Mammary epithelial cell (primary cell): ENCODE measurements at regions of chr9 and their contacts with region 1.

Region 1: GRCh38 chr9:128249908-128250838 is 25.6 kb downstream of the GOLGA2 start:
- DNase-seq: peak; percentile 86
- H3K4me3 ChIP-seq: peak overlapping the region; percentile 62 to 69 (median 64)
- H3K27ac ChIP-seq: peak overlapping the region; percentile 22
- H3K4me1 ChIP-seq: peaks cover 10% of the 10 kb centered on the region
- H3K27me3 ChIP-seq: no peaks in the 10 kb centered on the region
- CTCF ChIP-seq: no peak

Region 2: GRCh38 chr9:128127990-128128835 is 122.0 kb before region 1 on chr9:
- CTCF ChIA-PET with region 1: no interaction called
- dilution Hi-C with region 1: no loop called
- in situ Hi-C with region 1: no loop called
- intact Hi-C with region 1: loop called (anchors 10 kb)
- DNase-seq: peak; percentile 91
- H3K4me3 ChIP-seq: peak overlapping the region; percentile 64 to 100 (median 91)
- H3K27ac ChIP-seq: peak overlapping the region; percentile 90
- H3K4me1 ChIP-seq: peaks cover 15% of the 10 kb centered on the region
- H3K27me3 ChIP-seq: no peaks in the 10 kb centered on the region
- CTCF ChIP-seq: no peak

Region 3: DNA sequence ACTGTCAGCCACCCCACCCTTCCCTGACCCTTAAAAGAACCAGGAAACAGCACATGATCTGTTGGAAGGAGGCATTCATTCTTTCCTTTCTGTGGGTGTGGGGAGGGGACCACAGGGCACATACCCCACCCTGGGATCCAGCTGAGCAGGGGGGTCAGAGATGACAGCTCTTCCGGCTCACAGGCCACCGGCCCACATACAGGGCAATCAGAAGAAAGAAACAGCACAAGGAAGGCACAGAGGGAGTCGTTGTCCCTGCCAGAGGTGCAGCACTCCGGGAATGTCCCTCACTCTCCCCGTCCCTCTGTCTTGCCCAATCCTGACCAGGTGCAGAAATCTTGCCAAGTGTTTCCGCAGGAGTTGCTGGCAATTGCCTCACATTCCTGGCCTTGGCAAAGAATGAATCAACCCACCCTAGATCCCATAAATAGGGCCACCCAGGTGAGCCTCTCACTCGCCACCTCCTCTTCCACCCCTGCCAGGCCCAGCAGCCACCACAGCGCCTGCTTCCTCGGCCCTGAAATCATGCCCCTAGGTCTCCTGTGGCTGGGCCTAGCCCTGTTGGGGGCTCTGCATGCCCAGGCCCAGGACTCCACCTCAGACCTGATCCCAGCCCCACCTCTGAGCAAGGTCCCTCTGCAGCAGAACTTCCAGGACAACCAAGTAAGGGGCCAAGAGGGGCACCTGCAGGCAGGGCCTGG is 101.0 kb before region 1 on chr9 and contains the start of gene LCN2:
- CTCF ChIA-PET with region 1: no interaction called
- dilution Hi-C with region 1: loop called (anchors 5 kb)
- in situ Hi-C with region 1: no loop called
- intact Hi-C with region 1: no loop called
- DNase-seq: peak; percentile 90
- H3K4me3 ChIP-seq: peak within 1 kb of the TSS in 1 of 3 experiments; percentile 12
- H3K27ac ChIP-seq: no peak within 1 kb of the TSS
- H3K4me1 ChIP-seq: peaks cover 20% of the 10 kb centered on the region
- H3K27me3 ChIP-seq: no peaks in the 10 kb centered on the region
- CTCF ChIP-seq: no peak
- total RNA-seq, gene LCN2: 6.5 to 20.0 TPM

Region 4: GRCh38 chr9:128191406-128192046 is 58.6 kb before region 1 on chr9 and contains the start of gene CIZ1:
- CTCF ChIA-PET with region 1: no interaction called
- dilution Hi-C with region 1: loop called (anchors 5 kb)
- in situ Hi-C with region 1: no loop called
- intact Hi-C with region 1: loop called (anchors 2 kb)
- DNase-seq: peak; percentile 63
- H3K4me3 ChIP-seq: peak within 1 kb of the TSS; percentile 84 to 90 (median 88)
- H3K27ac ChIP-seq: peak within 1 kb of the TSS; percentile 26
- H3K4me1 ChIP-seq: peaks cover 19% of the 10 kb centered on the region
- H3K27me3 ChIP-seq: no peaks in the 10 kb centered on the region
- CTCF ChIP-seq: peak; percentile 41 to 72
- total RNA-seq, gene CIZ1: 36.0 to 109 TPM

Region 5: DNA sequence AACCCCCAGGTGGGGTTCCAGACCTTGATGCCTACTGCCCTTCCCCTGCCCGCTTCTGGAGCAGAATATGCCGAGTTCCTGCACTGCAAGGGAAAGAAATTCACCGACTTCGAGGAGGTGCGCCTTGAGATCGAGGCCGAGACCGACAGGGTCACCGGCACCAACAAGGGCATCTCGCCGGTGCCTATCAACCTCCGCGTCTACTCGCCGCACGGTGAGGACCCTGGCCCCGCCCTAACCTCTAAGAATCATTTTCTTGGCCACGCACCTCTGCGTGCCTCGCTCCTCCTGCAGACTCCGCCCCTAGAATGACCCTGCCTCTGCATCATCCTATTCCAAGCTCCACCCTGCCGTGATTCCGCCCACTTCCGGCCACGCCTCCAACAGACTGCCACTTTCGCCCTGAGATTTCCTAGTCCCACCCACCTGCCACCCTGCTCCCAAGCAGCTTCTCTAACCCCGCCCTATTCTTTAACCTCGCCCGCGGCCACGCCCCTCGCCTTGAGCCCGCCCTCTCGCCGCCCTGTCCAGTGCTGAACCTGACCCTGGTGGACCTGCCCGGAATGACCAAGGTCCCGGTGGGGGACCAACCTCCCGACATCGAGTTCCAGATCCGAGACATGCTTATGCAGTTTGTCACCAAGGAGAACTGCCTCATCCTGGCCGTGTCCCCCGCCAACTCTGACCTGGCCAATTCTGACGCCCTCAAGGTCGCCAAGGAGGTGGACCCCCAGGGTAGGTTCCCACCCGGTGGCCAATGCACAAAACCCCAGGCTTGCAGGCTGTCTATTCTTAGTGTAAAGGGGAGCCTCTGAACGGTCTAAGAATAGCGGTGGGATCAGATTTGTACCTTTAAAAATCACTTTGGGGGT is 31.4 kb before region 1 on chr9:
- CTCF ChIA-PET with region 1: no interaction called
- dilution Hi-C with region 1: no loop called
- in situ Hi-C with region 1: no loop called
- intact Hi-C with region 1: loop called (anchors 5 kb)
- DNase-seq: peak; percentile 93
- H3K4me3 ChIP-seq: peak overlapping the region in 1 of 3 experiments; percentile 18
- H3K27ac ChIP-seq: no peak overlapping the region
- H3K4me1 ChIP-seq: peaks cover 15% of the 10 kb centered on the region
- H3K27me3 ChIP-seq: no peaks in the 10 kb centered on the region
- CTCF ChIP-seq: no peak

Region 6: DNA sequence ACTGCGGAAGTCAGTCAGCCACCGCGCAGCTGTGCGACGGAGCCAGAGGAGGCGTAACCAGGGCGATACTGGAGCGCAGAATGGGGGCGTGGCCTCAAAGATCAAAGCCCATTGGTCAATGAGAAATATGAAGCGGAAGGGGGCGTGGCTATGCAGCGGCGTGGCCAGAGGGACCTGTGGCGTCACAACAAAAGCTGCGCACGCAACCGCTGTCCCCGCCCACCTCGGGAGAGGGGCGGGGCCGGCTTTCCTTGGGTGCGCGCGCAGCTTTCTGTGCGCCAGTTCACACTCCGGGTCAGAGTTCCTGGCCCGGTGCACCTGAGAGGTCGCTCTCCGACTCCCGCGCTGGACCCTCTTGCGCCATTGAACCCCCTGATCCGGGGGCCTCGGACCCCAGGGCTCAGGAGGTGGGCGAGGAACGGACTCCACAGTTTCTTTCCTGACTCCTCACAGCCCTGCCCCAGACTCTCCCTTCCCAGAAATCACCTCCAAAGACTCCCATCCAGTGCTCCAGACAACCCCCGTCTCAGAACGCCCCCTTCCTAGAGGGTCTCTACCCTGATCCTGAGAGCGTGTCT is 25.9 kb after region 1 on chr9 and contains the starts of genes GOLGA2 and SWI5:
- CTCF ChIA-PET with region 1: no interaction called
- dilution Hi-C with region 1: no loop called
- in situ Hi-C with region 1: no loop called
- intact Hi-C with region 1: loop called (anchors 2 kb)
- DNase-seq: peak; percentile 98
- H3K4me3 ChIP-seq: peak within 1 kb of the TSS; percentile 94 to 96 (median 95)
- H3K27ac ChIP-seq: peak within 1 kb of the TSS; percentile 84
- H3K4me1 ChIP-seq: peaks cover 25% of the 10 kb centered on the region
- H3K27me3 ChIP-seq: no peaks in the 10 kb centered on the region
- CTCF ChIP-seq: no peak
- total RNA-seq, gene GOLGA2: 42.2 to 76.7 TPM
- total RNA-seq, gene SWI5: 13.5 to 26.3 TPM

Region 7: GRCh38 chr9:128286440-128286839 is 36.3 kb after region 1 on chr9:
- CTCF ChIA-PET with region 1: no interaction called
- dilution Hi-C with region 1: loop called (anchors 5 kb)
- in situ Hi-C with region 1: no loop called
- intact Hi-C with region 1: no loop called
- DNase-seq: no peak
- H3K4me3 ChIP-seq: no peak overlapping the region
- H3K27ac ChIP-seq: no peak overlapping the region
- H3K4me1 ChIP-seq: no peaks in the 10 kb centered on the region
- H3K27me3 ChIP-seq: no peaks in the 10 kb centered on the region
- CTCF ChIP-seq: no peak

Region 8: DNA sequence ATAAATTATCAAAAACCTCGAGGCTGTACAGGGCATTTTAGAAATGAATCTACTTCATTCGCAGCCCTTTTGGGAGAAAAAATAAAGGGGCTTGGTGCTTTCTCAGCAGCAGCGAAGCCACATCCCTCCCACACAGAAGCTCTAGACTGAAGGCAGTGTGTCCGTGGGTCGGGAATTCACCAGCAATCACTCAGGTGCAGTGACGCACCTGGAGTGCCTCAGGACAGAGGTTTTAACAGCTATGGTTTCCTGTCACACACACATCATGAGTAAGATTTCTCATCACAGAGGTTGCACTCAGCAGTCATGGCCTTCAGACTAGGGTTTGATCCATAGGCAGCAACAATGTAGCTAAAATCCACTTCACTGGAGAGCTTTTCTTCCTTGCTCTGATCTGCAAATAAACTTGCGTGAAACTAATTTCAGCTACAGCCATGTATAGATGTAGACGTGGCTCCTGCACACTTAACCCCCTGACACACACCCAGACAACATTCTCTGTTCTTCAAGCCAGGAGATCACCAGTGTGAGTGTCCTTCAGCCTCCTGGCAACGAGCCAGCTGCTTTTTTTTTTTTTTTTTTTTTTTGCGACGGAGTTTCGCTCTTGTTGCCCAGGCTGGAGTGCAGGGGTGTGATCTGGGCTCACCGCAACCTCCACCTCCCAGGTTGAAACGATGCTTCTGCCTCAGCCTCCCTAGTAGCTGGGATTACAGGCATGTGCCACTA is 371.7 kb after region 1 on chr9:
- CTCF ChIA-PET with region 1: no interaction called
- dilution Hi-C with region 1: no loop called
- in situ Hi-C with region 1: no loop called
- intact Hi-C with region 1: no loop called
- DNase-seq: peak; percentile 72
- H3K4me3 ChIP-seq: no peak overlapping the region
- H3K27ac ChIP-seq: no peak overlapping the region
- H3K4me1 ChIP-seq: no peaks in the 10 kb centered on the region
- H3K27me3 ChIP-seq: no peaks in the 10 kb centered on the region
- CTCF ChIP-seq: no peak